A673 (cell line): ENCODE measurements at regions of chr14 and their contacts with region 1.

Region 1: GRCh38 chr14:39138440-39138839 is 24.3 kb downstream of the GEMIN2 start:
- DNase-seq: no peak
- H3K4me3 ChIP-seq: no peak overlapping the region
- H3K27ac ChIP-seq: no peak overlapping the region
- H3K4me1 ChIP-seq: no peaks in the 10 kb centered on the region
- H3K27me3 ChIP-seq: no peaks in the 10 kb centered on the region
- CTCF ChIP-seq: no peak

Region 2: DNA sequence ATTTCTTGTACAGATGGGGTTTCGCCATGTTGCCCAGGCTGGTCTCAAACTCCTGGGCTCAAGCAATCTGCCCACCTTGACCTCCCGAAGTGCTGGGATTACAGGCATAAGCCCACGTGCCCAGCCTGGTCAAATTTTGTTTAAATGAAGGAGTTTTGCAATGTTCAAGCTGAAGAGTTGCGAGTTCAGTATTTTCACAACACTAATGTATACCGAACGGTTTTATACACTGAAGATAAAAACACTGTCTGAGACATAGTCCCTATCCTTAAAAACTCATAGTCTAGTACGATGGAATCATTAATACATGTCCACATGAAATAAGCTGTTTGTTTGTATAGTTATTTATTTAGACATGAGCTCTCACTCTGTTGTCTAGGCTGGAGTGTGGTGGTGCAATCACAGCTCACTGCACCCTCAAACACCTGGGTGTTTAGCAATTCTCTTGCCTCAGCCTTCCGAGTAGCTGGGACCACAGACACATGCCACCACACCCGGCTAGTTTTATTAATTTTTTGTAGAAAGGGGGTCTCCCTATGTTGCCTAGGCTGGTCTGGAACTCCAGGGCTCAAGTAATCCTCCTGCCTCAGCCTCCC is 16.3 kb after region 1 on chr14:
- CTCF ChIA-PET with region 1: interaction called, 14 read pairs
- POLR2A ChIA-PET with region 1: no interaction called
- intact Hi-C with region 1: no loop called
- DNase-seq: no peak
- H3K4me3 ChIP-seq: no peak overlapping the region
- H3K27ac ChIP-seq: no peak overlapping the region
- H3K4me1 ChIP-seq: no peaks in the 10 kb centered on the region
- H3K27me3 ChIP-seq: no peaks in the 10 kb centered on the region
- CTCF ChIP-seq: no peak

Region 3: DNA sequence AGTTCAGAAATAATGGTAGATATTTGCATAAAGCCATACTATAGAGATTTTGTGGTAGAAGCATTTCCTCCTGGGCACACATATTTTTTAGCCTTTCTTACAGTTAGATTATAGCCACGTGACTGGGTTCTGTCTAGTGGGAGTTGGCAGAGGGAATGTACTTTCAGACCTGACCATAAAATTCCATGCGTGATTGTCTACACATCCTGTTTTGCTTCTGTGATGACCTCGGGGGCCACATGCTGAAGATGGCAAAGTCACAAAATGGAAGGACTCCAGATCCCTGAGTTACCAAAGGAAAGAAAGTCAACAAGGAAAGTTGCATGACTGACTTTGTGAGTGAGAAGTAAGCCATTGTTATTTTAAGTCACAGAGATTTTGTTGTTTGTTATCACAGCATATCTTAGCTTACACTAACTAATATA is 80.6 kb after region 1 on chr14:
- CTCF ChIA-PET with region 1: no interaction called
- POLR2A ChIA-PET with region 1: no interaction called
- intact Hi-C with region 1: no loop called
- DNase-seq: no peak
- H3K4me3 ChIP-seq: no peak overlapping the region
- H3K27ac ChIP-seq: no peak overlapping the region
- H3K4me1 ChIP-seq: no peaks in the 10 kb centered on the region
- H3K27me3 ChIP-seq: no peaks in the 10 kb centered on the region
- CTCF ChIP-seq: no peak